Gastrocnemius medialis (tissue), 4 donors: ENCODE measurements at regions of chr18 and their contacts with region 1.

Region 1: GRCh38 chr18:74551936-74552555 is 17.7 kb downstream of the CNDP1 start:
- DNase-seq: peak; percentile 40 to 60
- ATAC-seq: peak; percentile 93 to 95
- H3K4me3 ChIP-seq: no peak overlapping the region
- H3K27ac ChIP-seq: no peak overlapping the region
- H3K4me1 ChIP-seq: peaks cover 0 to 6% of the 10 kb centered on the region in 2 donors
- H3K27me3 ChIP-seq: no peaks in the 10 kb centered on the region
- CTCF ChIP-seq: peak; percentile 48 to 79 (median 68)
- POLR2A ChIP-seq: no peak

Region 2: DNA sequence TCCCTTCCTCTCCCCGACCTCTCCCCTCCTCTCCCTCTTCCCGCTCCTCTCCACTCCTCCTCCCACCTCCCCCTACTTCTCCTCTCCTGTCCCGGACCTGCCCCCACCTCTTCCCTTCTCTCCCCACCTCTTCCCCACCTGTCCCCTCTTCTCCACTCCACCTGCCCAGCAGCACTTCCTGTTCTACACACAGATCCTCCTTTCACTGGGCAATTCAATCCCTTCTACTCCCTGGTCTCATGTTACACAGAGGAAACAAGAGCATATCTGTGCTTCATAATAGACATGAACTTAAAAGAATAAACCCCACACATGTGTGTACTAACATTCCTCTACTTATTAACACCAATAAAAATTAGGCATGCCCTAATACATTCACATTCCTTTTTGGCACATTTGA is 368.9 kb before region 1 on chr18:
- in situ Hi-C with region 1: loop called in 1 of 4 experiments (anchors 10 kb)
- intact Hi-C with region 1: no loop called
- DNase-seq: no peak
- ATAC-seq: no peak
- H3K4me3 ChIP-seq: no peak overlapping the region
- H3K27ac ChIP-seq: no peak overlapping the region
- H3K4me1 ChIP-seq: no peaks in the 10 kb centered on the region
- H3K27me3 ChIP-seq: peaks cover 7 to 13% (median 11%) of the 10 kb centered on the region in 3 donors
- CTCF ChIP-seq: no peak
- POLR2A ChIP-seq: no peak